H1 (cell line): ENCODE measurements at regions of chr9 and their contacts with region 1.

Region 1: DNA sequence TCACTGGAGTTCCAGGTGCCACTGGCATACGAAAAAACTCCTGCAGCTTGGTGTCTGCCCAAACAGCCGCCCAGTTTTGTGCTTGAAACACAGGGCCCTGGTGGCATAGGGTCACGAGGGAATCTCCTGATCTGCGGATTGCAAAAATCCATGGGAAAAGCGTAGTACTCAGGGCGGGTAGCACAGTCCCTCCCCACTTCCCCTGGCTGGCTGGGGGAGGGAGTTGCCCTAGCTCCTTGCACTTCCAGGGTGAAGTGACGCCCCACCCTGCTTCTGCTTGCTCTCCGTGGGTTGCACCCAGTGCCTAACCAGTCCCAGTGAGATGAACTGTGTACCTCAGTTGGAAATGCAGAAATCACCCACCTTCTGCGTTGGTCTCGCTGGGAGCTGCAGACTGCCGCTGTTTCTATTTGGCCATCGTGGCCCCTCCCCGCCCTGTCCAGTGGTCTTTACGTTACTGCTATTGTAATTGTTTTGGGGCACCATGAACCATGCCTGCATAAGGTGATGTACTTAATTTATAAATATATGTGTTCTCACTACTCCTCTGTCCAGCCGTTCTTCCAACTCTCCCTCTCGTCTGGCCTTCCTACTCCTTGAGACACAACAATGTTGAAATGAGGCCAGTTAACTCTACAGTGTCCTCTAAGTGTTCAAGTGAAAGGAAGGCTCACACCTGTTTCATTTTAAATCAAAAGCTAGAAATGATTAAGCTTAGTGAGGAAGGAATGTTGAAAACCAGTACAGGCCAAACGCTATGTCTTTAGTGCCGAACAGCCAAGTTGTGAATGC is 65.9 kb downstream of the CCDC171 start:
- DNase-seq: no peak
- H3K4me3 ChIP-seq: no peak overlapping the region
- H3K27ac ChIP-seq: no peak overlapping the region
- H3K4me1 ChIP-seq: no peaks in the 10 kb centered on the region; a peak in 1 of 7 replicates
- H3K27me3 ChIP-seq: no peaks in the 10 kb centered on the region
- CTCF ChIP-seq: no peak
- EP300 ChIP-seq: no peak
- POLR2A ChIP-seq: no peak
- RAD21 ChIP-seq: no peak

Region 2: DNA sequence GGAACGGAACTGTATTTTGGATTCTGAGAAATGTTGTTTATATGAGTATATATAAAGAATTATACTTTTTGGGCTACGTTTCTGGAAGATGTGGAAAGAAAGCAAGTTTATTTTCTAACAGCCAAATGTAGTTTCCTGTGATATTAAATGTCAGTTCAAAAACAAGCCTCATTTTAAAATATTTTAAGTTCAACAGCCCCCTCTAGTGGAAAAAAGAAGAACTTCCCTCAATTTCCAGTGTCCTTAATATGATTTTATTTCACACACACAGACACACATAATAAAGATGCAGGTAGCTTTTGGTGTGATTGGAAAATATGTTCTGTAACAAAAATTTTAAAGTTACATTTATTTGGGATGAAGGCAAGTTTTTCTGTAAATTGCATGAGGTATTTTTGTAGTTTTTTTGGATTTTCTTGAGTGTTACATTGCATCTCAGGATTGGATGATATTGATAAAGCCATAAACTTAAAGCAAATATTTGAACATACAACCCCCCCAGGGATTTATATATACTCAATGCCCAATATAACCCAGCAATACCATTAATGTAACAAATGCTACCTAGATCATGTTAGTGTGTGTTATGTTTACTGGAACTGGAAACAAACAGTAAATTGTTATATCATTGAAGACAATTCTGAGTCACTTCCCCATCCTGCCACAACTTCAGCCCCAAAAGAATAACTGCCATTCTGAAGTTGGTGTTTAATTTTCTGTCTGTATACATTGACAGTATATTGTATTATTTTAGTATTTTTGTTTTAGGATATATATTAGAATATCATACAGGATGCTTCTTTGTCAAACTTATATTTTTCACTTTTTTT is 11.9 kb before region 1 on chr9:
- CTCF ChIA-PET with region 1: interaction called, 20 read pairs
- POLR2A ChIA-PET with region 1: no interaction called
- DNase-seq: no peak
- H3K4me3 ChIP-seq: no peak overlapping the region
- H3K27ac ChIP-seq: no peak overlapping the region
- H3K4me1 ChIP-seq: no peaks in the 10 kb centered on the region
- H3K27me3 ChIP-seq: no peaks in the 10 kb centered on the region
- CTCF ChIP-seq: peak in 2 of 3 experiments; percentile 27 to 32; a peak in 2 of 4 replicates
- EP300 ChIP-seq: no peak
- POLR2A ChIP-seq: no peak
- RAD21 ChIP-seq: peak in 1 of 2 experiments; percentile 60

Region 3: DNA sequence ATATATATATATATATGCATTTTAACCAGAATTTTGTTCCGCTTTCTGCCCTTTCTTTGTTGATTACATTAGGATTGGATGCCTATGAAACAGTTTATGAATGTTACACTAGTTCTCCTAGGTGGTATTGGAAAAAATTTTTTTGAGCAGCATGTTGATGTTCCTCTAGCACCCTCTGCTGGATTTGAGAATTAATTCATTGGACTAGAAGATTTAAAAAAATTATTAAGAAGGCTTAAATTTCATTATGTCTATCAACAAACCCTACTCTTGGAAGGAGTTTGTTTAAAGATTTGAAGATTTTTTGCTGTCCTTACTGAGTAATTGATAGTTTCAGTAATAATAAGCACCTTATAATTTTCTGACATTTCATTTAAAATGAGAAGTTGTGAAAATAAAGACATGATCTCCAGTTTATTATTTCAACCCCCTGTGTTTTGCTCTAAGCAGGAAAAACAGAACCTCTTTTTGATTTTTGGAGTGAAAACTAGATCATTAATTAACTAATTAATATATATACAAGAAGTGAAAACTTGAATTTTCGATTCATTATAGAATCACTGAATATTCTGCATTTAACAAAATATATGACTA is 23.7 kb after region 1 on chr9:
- CTCF ChIA-PET with region 1: interaction called, 12 read pairs
- POLR2A ChIA-PET with region 1: no interaction called
- DNase-seq: no peak
- H3K4me3 ChIP-seq: no peak overlapping the region
- H3K27ac ChIP-seq: no peak overlapping the region
- H3K4me1 ChIP-seq: no peaks in the 10 kb centered on the region; a peak in 1 of 7 replicates
- H3K27me3 ChIP-seq: no peaks in the 10 kb centered on the region
- CTCF ChIP-seq: peak in 1 of 3 experiments; percentile 31; a peak in 2 of 4 replicates
- EP300 ChIP-seq: no peak
- POLR2A ChIP-seq: no peak
- RAD21 ChIP-seq: peak; percentile 53 to 61